ENCODE measurements at regions of chr10 and their contacts with region 1.

Region 1: DNA sequence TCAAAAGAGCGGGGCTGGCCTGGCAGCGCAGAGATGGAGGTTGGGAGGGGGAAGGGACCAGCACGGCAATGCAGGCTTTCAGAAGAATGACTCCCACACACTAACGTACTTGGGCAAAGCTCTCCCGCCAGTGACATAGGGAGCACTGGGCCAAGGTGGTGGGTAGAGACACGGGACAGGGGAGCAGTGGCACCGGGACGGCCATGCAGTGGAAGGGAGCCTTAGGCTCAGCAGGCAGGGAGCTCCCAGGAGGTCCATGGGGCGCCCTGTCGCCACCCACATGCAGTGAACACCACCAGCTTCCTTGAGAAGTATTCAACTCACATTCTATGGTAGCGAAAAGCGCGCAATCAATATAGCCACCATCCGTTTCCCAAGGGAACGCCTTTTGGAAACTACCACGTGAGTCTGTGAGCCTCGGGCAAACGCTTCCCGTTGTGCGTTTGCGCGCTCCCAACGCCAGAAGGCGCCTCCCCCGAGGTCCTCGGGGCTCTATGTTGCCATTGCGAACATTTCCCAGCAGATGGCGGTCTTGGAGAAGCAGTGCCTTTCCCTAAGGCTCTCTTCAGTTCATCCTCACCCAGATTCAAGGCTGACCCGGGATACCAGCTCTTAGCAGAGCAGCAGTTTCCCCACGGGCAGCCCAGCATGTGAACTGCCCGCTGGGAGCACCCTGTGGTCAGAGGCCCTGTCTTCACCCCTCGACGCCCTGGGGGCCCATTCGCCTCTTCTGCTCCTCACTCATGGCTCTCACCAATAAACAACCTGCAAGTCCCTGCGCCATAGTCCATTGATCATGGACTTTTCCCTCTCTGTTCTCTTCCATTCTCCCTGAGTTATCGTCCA is 16.4 kb upstream of the OPALIN start:
- DNase-seq: peak; percentile 82 to 91 (median 86)
- ATAC-seq: peak; percentile 53 to 90 (median 86)
- H3K4me3 ChIP-seq: peak overlapping the region; percentile 7 to 63 (median 49)
- H3K27ac ChIP-seq: peak overlapping the region in 3 of 12 donors; percentile 11 to 24 (median 20)
- H3K4me1 ChIP-seq: peaks cover 0 to 31% (median 11%) of the 10 kb centered on the region in 12 donors
- H3K27me3 ChIP-seq: no peaks in the 10 kb centered on the region
- CTCF ChIP-seq: peak; percentile 92 to 100 (median 96)
- POLR2A ChIP-seq: no peak

Region 2: GRCh38 chr10:96275685-96276418 is 99.4 kb before region 1 on chr10:
- intact Hi-C with region 1: no loop called
- DNase-seq: peak in 4 of 5 donors; percentile 46 to 79 (median 61)
- ATAC-seq: peak; percentile 81 to 90 (median 88)
- H3K4me3 ChIP-seq: no peak overlapping the region
- H3K27ac ChIP-seq: peak overlapping the region in 2 of 12 donors; percentile 18 to 27
- H3K4me1 ChIP-seq: peaks cover 0 to 25% (median 1%) of the 10 kb centered on the region in 12 donors
- H3K27me3 ChIP-seq: peaks cover 0 to 10% (median 0%) of the 10 kb centered on the region in 9 donors
- CTCF ChIP-seq: no peak
- POLR2A ChIP-seq: no peak

Region 3: GRCh38 chr10:96513698-96514561 is 138.7 kb after region 1 on chr10 and contains the start of gene TLL2:
- intact Hi-C with region 1: loop called in 7 of 10 experiments (anchors 2 to 5 kb)
- DNase-seq: peak; percentile 88 to 94 (median 92)
- ATAC-seq: peak; percentile 96 to 97 (median 96)
- H3K4me3 ChIP-seq: peak within 1 kb of the TSS; percentile 41 to 71 (median 64)
- H3K27ac ChIP-seq: peak within 1 kb of the TSS in 11 of 12 donors; percentile 27 to 79 (median 68)
- H3K4me1 ChIP-seq: peaks cover 4 to 35% (median 16%) of the 10 kb centered on the region in 12 donors
- H3K27me3 ChIP-seq: peaks cover 0 to 33% (median 0%) of the 10 kb centered on the region in 9 donors
- CTCF ChIP-seq: peak; percentile 64 to 97 (median 76)
- POLR2A ChIP-seq: peak in 1 of 2 donors; percentile 66
- total RNA-seq, gene TLL2: 1.8 to 8.6 (median 3.6) TPM

Region 4: DNA sequence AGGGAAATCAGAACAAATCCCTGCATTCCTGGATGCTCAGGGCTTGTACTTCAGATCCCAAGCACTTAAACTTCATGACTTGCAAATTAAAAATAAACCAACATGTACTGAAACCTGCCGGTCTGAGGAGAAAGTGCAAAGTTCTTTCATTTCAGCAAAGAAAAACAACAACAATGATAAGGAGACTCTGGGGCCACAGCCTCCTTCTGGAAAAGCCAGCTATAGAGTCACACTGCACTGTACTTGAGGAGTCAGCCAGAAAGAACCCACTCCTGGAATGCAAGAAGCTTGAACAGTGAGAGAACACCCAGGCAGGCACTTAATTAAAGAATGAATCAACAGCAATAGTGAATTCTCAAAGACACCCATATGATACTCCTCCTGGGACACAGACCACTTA is 261.3 kb after region 1 on chr10:
- intact Hi-C with region 1: loop called in 1 of 10 experiments (anchors 5 kb)
- DNase-seq: no peak
- ATAC-seq: no peak
- H3K4me3 ChIP-seq: no peak overlapping the region
- H3K27ac ChIP-seq: no peak overlapping the region
- H3K4me1 ChIP-seq: peaks cover 0 to 11% (median 1%) of the 10 kb centered on the region in 12 donors
- H3K27me3 ChIP-seq: no peaks in the 10 kb centered on the region
- CTCF ChIP-seq: no peak
- POLR2A ChIP-seq: no peak

Region 5: DNA sequence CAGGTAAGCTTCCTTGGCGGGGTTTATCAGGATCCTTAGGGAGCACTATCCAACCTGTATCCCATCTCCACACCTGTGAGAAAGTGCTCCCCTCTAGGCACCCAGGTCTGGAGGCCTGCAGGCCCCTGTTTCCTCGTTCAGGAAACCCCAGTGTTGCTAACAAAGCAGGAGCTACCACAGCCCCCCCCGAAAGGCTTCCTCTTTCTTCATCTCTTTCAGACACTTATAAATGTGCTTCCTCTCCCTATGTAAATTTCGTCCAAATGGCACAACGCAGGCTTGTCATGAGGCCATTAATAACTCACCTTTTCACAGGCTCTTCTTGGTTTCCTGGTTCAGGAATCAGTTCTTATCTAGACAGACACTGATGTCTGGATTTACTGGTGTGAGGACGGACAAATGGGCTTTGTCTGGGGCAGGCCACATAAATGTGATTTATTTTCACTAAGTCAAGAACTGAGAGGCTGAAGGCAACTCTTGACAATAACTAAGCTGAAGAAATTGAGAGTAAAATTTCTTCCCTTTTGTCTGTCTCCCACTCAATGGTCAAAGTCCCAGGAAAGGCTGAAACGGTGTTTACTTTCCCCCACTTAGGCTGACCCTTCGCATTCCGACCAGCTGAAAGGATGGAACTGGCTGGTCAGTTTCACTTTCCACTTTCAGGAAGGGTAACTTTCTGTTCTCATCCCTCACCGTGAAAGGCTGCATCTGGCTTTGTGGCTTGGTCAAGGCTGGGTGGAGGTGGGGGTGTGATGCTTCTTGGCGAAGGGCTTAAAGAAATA is 298.3 kb after region 1 on chr10:
- intact Hi-C with region 1: no loop called
- DNase-seq: peak in 3 of 5 donors; percentile 29 to 51 (median 35)
- ATAC-seq: peak in 3 of 4 donors; percentile 60 to 76 (median 69)
- H3K4me3 ChIP-seq: peak overlapping the region in 4 of 12 donors; percentile 15 to 30 (median 27)
- H3K27ac ChIP-seq: peak overlapping the region in 7 of 12 donors; percentile 2 to 89 (median 51)
- H3K4me1 ChIP-seq: peaks cover 0 to 48% (median 0%) of the 10 kb centered on the region in 12 donors
- H3K27me3 ChIP-seq: peaks cover 0 to 3% (median 0%) of the 10 kb centered on the region in 9 donors
- CTCF ChIP-seq: no peak
- POLR2A ChIP-seq: no peak

Region 6: DNA sequence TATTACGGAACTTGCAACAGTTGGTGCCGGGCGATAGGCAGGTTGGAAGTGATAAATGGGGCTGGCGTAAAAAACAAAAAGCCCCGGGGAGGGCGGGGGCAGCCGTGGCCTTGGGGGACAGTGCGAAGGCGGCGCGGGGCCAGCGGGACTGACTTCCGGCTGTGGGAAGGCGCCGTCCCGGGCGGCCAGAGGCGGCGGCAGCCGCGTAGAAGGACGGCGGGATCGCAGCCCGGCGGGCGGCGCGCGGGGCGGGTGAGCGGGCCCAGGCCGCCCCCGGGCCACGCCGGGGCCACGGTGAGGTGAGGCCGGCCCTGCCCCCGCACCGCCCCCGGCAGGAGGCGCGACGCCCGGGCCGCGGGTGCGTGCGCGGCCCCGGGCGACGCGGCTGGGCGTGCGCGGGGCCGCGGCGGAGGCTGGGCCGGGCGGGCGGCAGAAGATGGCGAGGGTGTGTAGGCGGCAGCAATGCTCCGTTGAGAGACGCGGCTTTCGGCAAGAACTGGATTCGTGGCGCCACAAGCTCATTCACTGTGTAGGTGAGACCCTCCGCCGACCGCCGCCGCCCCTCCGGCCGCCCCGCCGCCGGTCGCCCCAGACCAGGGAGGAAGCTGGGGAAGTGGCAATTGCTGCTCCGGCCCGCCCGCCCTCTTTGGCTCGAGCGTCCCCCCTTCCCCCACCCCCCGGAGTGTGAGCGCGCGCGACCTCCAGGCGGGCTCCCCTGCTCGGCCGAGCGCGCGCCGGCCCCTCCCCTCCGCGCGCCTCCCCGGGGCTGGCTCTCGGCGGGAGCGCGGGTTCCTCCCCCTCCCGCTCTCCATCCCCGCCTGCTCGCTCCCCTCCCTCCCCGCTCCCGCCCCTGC is 456.9 kb after region 1 on chr10 and contains the start of gene LCOR:
- intact Hi-C with region 1: loop called in 4 of 10 experiments (anchors 5 to 10 kb)
- DNase-seq: peak; percentile 89 to 93 (median 91)
- ATAC-seq: peak; percentile 83 to 94 (median 91)
- H3K4me3 ChIP-seq: peak within 1 kb of the TSS; percentile 84 to 98 (median 90)
- H3K27ac ChIP-seq: peak within 1 kb of the TSS; percentile 91 to 99 (median 96)
- H3K4me1 ChIP-seq: peaks cover 0 to 53% (median 38%) of the 10 kb centered on the region in 12 donors
- H3K27me3 ChIP-seq: no peaks in the 10 kb centered on the region
- CTCF ChIP-seq: peak in 2 of 12 donors; percentile 23 to 29
- POLR2A ChIP-seq: peak in 1 of 2 donors; percentile 78
- total RNA-seq, gene LCOR: 9.6 to 31.4 (median 21.2) TPM

Region 7: DNA sequence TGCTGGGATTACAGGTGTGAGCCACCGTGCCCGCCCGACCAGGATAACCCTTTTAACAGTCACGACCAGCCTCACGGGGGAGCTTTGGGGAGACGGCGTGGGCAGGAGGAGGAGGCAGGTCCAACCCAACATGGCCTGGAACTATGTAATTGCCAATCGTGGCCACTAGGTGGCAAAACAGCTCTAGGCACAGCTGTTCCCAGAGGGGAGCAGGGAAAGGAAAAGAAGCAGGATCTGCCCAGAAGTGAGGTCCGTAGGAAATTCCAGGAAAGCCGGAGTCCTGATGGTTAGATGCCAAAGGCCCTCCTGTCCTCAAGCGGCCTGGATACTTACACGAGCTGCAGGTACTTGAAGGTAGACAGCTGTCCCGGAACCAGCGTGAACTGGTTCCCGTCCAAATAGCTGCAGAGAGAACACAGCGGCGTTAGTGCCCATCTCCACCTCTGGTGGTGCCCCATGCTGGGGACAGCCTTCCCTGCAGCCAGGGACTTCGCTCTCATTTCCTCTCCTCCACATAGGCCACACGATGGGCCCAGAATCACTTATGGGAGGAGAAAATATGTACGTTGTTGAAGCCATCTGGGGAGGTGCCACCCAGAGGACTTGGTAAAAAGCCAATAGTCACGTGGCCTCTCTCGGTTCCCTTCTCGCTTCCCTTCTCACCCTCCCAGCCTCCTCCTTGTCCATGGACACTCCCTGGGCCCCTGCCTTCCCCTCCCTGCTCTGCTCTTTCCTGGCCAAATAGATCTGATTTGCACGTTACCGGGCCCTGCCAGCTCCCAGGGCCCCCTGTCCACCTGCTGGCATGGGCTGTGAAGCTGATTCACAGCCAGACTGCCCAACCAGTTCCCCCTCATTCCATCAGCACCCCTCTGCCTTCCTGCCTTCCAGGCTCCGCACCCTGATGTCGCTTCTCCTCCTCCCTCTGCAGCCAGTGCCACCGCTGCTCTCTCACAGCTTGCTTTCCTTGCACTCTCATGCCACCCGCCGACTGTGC is 662.5 kb after region 1 on chr10:
- intact Hi-C with region 1: loop called in 1 of 10 experiments (anchors 10 kb)
- DNase-seq: peak; percentile 69 to 81 (median 78)
- ATAC-seq: peak; percentile 89 to 95 (median 90)
- H3K4me3 ChIP-seq: peak overlapping the region in 11 of 12 donors; percentile 29 to 61 (median 46)
- H3K27ac ChIP-seq: peak overlapping the region in 3 of 12 donors; percentile 5 to 30 (median 6)
- H3K4me1 ChIP-seq: peaks cover 0 to 12% (median 10%) of the 10 kb centered on the region in 12 donors
- H3K27me3 ChIP-seq: no peaks in the 10 kb centered on the region
- CTCF ChIP-seq: peak; percentile 72 to 92 (median 86)
- POLR2A ChIP-seq: no peak